Common myeloid progenitor, CD34-positive (primary cell): ENCODE measurements at regions of chr19 and their contacts with region 1.

Region 1: DNA sequence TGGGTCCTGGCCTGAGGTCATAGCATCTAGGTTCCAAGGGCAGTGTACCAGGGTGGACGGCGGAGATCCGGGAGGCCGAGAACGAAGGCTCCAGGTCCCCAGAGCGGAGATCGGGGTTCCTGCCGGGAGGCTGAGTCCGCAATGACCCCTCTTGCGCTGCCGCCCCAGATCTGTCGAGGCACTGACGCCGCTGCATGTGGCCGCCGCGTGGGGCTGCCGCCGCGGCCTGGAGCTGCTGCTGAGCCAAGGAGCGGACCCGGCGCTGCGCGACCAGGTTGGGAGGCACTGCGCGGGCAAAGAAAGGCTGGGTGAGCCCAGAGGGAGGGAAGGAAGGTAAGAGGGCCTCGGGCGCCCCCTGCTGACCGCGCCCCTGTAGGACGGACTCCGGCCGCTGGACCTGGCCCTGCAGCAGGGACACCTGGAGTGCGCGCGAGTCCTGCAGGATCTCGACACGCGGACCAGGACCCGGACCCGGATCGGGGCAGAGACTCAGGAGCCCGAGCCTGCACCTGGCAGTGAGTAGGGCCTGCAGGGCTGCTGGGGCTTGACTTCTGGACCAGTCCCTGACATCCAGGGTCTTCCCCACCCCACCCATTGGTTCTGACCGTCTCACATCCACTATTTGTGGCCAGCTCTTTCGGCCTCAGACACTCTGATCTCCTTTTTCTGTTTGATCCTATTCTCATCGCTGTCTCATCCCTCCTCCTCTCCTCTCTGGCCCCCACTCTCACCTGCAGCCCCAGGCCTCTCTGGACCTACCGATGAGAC is 971 bp downstream of the ANKLE1 start:
- DNase-seq: peak; percentile 77 to 84 (median 82)
- H3K4me3 ChIP-seq: peak overlapping the region; percentile 19 to 74 (median 61)
- H3K27ac ChIP-seq: no peak overlapping the region
- H3K4me1 ChIP-seq: peaks cover 0 to 20% (median 18%) of the 10 kb centered on the region in 4 experiments
- H3K27me3 ChIP-seq: no peaks in the 10 kb centered on the region

Region 2: GRCh38 chr19:17069218-17069617 is 213.5 kb before region 1 on chr19:
- CTCF ChIA-PET with region 1: interaction called, 10 read pairs
- POLR2A ChIA-PET with region 1: no interaction called
- DNase-seq: no peak
- H3K4me3 ChIP-seq: no peak overlapping the region
- H3K27ac ChIP-seq: no peak overlapping the region
- H3K4me1 ChIP-seq: peaks cover 2 to 22% (median 12%) of the 10 kb centered on the region in 4 experiments
- H3K27me3 ChIP-seq: no peaks in the 10 kb centered on the region

Region 3: DNA sequence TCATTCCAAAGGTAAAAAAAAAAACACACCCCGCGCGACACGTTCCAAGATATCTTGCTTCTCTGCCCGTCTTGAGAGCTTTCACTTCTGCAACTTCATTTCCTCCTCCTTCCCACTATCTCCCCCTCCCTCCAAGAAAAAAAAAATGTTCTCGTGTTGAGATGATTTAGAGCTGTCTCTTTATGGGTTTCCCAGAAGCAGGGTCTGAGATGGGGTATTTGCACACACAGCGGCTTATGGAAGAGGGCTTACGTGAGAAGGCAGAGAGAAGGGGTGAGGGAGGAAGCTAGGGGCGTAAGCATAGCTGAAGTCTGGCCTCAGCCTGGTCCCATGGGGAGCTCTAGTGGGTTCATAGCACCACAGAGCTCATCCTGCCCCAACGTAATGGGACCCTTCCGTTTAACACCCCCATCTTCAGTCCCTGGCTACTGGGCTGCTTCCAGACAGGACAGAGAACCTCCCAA is 98.8 kb before region 1 on chr19:
- CTCF ChIA-PET with region 1: interaction called, 12 read pairs
- POLR2A ChIA-PET with region 1: no interaction called
- DNase-seq: peak; percentile 57 to 82 (median 78)
- H3K4me3 ChIP-seq: peak overlapping the region in 6 of 7 experiments; percentile 43 to 71 (median 54)
- H3K27ac ChIP-seq: peak overlapping the region; percentile 35 to 64
- H3K4me1 ChIP-seq: peaks cover 0 to 27% (median 23%) of the 10 kb centered on the region in 4 experiments
- H3K27me3 ChIP-seq: no peaks in the 10 kb centered on the region

Region 4: GRCh38 chr19:17205237-17206140 is 77.2 kb before region 1 on chr19:
- CTCF ChIA-PET with region 1: interaction called, 23 read pairs
- POLR2A ChIA-PET with region 1: no interaction called
- DNase-seq: peak; percentile 50 to 69 (median 67)
- H3K4me3 ChIP-seq: no peak overlapping the region
- H3K27ac ChIP-seq: no peak overlapping the region
- H3K4me1 ChIP-seq: no peaks in the 10 kb centered on the region
- H3K27me3 ChIP-seq: no peaks in the 10 kb centered on the region

Region 5: DNA sequence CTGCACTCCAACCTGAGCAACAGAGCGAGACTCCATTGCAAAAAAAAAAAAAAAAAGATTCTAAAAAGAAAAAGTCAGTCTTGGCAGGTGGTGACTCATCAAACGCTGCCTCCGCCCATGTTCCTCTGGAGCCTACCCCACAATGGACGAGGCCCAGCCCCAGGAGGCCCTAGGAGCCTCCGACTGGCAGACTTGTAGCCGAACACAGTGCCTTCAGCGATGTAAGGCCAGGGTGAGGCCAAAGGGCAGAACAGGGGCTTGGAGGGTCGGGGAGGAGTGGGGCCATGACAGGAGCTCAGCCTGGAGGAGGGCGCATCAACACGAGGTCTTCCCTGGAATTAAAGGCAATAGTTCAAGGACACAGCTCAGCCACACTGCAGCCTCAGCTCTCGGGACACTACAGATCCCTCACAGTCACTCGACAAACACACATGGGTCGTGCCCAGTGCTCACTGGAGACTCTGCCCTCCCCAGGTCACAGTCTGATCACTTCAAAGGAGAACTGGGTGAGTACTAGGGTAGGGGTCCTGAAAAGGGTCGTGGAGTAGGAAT is 62.4 kb before region 1 on chr19:
- CTCF ChIA-PET with region 1: no interaction called
- POLR2A ChIA-PET with region 1: no interaction called
- DNase-seq: peak; percentile 37 to 67 (median 66)
- H3K4me3 ChIP-seq: no peak overlapping the region
- H3K27ac ChIP-seq: peak overlapping the region in 1 of 2 experiments; percentile 14
- H3K4me1 ChIP-seq: peaks cover 0 to 8% (median 7%) of the 10 kb centered on the region in 4 experiments
- H3K27me3 ChIP-seq: no peaks in the 10 kb centered on the region